ENCODE measurements at regions of chr9 and their contacts with region 1.

Region 1: DNA sequence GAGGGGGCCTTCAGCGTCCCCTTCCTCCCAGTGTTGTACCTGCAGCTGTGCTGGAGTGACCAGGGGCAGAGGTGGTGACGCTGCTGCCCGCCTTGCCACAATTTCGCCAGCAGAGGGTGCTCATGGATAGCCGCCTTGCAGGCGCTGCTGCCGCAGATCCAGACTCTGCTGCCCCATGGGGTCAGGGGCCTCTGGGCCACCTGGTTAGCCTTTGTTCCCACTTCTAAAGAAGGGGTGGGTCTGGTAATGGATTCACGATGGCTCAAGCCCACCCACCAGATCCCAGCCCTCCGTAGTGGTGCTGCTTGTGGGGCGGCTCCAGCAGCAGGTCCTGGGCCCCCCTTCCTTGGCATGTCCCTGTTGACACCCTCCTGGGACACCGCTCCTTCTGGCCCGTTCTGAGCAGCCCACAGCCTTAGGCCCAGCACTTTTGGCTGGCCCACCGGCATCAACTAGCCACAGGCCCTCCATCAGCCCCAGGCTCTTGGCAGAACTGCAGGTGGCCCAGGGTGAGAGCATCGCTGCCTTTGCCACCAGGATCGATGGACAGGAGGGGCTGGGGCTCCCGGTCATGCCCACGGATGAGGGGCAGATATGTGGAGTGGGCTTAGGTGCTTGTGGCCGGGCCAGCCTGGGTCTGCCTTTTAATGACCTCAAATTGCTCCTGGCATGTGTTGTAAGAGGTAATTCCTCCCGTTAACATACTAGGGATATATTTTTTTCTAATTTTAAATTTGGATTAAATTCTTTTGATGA is 57.2 kb downstream of the COL5A1 start:
- DNase-seq: peak; percentile 81
- ATAC-seq: peak; percentile 71

Region 2: GRCh38 chr9:134469041-134469875 is 229.5 kb before region 1 on chr9:
- intact Hi-C with region 1: no loop called
- DNase-seq: peak; percentile 77
- ATAC-seq: peak; percentile 81

Region 3: DNA sequence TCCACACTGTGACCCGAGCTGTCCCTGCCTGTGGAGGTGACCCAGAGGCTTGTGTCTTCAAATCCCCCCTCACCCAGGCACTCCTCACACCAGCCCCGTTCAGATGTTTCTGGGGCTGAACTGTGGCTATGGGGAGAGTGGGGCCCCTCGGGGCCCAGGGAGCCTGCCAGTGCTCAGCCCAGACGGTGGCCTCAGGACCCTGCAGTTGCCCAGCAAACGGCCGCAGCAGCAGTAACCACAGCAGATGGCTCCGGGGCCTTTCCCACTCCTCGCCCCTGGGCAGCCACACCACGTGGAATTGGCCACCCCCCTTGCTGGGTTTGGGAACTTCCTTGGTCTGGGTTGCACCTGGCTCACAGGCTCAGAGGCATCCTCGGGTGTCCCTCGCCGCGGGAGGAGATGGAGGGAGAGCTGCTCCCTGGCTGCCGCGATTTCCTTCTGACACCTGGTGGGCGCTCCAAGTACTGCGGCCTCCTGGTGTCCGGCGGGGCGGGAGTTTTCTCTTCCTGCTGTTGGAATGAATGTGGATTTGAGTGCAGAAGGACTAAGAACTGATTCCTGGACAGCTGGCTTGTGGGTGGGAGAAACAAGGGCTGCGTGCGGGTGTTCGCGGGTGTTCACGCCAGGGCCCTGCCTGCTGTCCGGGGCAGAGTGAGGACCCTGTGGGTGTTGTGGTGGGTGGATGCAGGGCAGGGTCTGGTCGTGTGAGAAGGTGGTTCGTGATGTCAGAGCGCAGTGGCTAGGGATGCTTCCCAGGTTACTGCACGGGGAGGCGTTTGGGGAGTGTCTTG is 40.3 kb after region 1 on chr9:
- intact Hi-C with region 1: loop called (anchors 1 kb)
- DNase-seq: no peak
- ATAC-seq: peak; percentile 36

Region 4: DNA sequence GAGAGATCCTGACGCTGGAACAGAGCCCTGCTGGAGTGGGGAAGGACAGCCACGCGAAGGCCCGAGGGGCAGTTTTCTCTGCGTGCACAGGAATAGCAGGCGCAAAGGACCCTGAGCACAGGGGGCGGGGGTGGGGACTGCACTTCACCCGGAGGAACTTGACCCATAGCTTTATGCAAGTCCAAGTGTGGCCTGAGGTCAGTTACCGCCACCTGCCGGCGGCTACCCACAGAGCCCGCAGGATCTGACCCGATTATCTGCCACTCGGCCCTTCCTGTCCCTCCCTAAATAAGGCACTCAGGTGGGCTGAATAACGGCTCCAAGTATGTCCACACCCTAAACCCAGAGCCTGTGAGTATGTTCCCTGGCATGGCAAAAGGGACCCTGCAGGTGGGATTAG is 284.3 kb after region 1 on chr9:
- intact Hi-C with region 1: loop called (anchors 1 kb)
- DNase-seq: peak; percentile 80
- ATAC-seq: peak; percentile 61

Region 5: DNA sequence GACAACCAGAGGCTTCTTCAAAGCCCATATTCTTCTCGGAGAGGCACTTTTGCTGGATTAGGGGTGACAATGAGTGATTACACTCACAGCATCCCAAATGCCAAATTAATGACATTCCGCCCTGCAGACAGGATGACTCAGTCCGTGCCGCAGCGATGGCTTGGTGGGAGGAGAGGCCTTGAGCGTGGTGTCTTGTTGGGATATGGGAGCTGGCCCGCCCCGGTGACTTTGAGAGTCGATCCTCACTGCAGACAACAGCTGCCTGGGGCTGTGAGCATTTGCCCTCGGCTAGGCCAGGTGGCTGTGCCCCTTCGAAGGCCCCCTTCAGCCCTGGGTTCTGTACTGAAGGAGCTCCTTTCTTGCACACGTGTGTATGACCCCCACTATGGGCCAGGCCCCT is 418.5 kb after region 1 on chr9:
- intact Hi-C with region 1: no loop called
- DNase-seq: no peak
- ATAC-seq: no peak

Region 6: DNA sequence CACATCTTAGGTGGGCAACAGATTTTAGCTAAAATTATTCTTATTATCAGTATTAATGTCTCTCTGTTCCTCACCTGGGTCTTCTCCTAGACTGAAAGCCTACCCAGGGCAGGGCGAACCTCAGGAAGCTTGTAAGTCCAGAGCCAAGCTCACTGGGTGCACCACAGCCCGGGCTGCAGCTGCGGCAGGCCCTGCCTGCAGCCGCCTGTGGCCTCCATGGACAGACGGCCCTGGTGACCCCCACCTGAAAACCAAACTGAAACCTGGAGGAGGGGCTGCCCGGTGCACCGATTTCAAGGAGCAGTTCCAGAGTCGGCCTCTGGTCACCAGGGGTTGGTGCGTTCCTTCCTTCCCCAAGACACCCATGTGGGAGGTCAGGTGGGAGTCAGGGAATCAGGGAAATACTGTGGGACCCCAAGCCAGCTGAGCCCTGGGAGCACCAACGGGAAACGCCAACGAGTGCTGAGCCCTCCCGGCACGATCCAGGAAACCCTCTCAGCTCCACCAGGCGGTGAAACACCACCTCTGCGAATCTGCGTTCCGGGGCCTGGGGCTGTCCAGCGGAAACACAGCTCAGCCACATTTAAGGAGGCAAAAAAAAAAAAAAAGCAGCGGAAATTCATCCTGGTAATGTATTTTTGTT is 712.2 kb after region 1 on chr9:
- intact Hi-C with region 1: loop called (anchors 5 kb)
- DNase-seq: no peak
- ATAC-seq: no peak

Measured in Right ventricle myocardium inferior (tissue), 1 donor.